Activated T-helper 1 cell treated with anti-CD3 and anti-CD28 coated beads, Interleukin-12 subunit alpha, Interleukin-12 subunit beta, Interleukin-2, Interleukin-4 antibody, amounts not matched to agents 30 ng/mL and 10 ng/mL and 1 ng/mL, durations not matched to agents 14 hours and 24 hours and 36 hours (primary cell): ENCODE measurements at regions of chr6 and their contacts with region 1.

Region 1: DNA sequence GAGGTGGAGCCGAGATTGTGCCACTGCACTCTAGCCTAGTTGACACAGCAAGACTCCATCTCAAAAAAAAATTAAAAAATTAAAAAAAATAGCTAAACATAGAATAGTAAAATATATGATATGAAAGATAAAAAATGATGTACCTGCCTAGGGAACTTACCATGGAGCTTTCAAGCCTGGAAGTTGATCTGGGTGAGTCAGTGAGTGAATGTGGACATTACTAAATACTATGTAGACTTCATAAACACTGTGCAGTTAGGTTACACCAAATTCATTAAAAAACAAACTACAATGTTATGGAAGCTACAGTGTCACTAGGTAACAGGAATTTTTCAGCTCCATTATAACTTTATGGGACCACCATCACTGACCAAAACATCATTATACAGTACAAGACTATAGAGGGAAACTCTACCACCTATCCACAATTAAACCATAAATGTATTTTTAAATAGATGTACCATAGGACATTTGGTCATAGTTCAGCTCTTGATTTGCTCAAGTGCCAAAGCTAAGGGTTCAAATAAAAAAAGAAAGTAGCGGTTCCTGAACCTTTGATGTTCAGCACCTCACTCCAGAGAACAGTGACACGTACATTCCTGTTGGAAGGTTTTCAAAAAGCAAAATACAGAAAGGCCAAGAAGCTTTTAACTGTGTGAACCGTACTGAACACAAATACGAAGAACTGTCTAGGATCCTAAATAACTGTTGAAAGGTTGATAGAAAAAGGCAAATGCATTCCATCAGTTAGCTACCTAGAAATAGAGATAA is 52.4 kb upstream of the SPDEF start:
- DNase-seq: no peak
- H3K4me3 Mint-ChIP-seq: no peak overlapping the region
- H3K27ac Mint-ChIP-seq: no peak overlapping the region
- H3K4me1 Mint-ChIP-seq: peaks cover 36% of the 10 kb centered on the region
- H3K27me3 Mint-ChIP-seq: no peaks in the 10 kb centered on the region

Region 2: GRCh38 chr6:34196126-34196830 is 412.2 kb before region 1 on chr6:
- intact Hi-C with region 1: loop called (anchors 1 kb)
- DNase-seq: peak; percentile 83
- H3K4me3 Mint-ChIP-seq: peak overlapping the region; percentile 79
- H3K27ac Mint-ChIP-seq: peak overlapping the region; percentile 70
- H3K4me1 Mint-ChIP-seq: peaks cover 5% of the 10 kb centered on the region
- H3K27me3 Mint-ChIP-seq: peaks cover 10% of the 10 kb centered on the region

Region 3: GRCh38 chr6:34425498-34426410 is 182.8 kb before region 1 on chr6 and contains the start of gene RPS10:
- intact Hi-C with region 1: loop called (anchors 1 kb)
- DNase-seq: peak; percentile 88
- H3K4me3 Mint-ChIP-seq: peak within 1 kb of the TSS; percentile 99
- H3K27ac Mint-ChIP-seq: peak within 1 kb of the TSS; percentile 99
- H3K4me1 Mint-ChIP-seq: peaks cover 31% of the 10 kb centered on the region
- H3K27me3 Mint-ChIP-seq: peaks cover 4% of the 10 kb centered on the region
- total RNA-seq, gene RPS10: 1,492 and 1,525 TPM in 2 replicates

Region 4: DNA sequence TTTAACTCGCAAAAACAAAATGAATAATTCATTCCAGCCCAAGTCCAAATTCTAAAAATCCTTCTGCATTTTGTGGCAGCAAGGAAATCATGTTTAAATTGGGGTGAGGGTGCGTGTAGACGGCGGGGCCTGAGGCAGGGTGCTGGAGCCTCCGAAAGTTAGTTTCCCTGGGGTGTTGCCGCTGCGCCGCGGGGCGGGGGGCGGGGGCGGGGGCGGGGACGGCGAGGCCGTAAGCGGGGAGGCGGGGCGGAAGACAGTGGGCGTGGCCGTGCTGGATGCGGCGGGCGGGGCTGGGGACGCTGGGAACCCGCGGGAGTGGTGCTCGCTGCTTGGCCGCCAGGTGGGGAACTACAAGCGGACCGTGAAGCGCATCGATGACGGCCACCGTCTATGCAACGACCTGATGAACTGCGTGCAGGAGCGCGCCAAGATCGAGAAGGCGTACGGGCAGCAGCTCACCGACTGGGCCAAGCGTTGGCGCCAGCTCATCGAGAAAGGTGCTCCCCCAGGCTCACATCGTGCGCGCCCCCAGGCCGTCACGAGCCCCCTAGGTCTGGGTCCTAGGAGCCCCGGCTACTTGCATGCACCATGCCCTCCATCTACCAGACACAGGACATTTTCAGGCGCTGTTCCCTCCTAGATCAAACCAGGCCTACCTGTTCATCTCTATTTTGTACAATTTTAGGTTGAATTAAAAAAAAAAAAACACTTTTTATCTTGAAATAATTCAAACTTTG is 81.3 kb before region 1 on chr6:
- intact Hi-C with region 1: loop called (anchors 1 kb)
- DNase-seq: peak; percentile 91
- H3K4me3 Mint-ChIP-seq: peak overlapping the region; percentile 6
- H3K27ac Mint-ChIP-seq: no peak overlapping the region
- H3K4me1 Mint-ChIP-seq: no peaks in the 10 kb centered on the region
- H3K27me3 Mint-ChIP-seq: peaks cover 6% of the 10 kb centered on the region

Region 5: GRCh38 chr6:34696739-34697543 is 88.4 kb after region 1 on chr6 and contains the start of gene ILRUN:
- intact Hi-C with region 1: loop called (anchors 1 kb)
- DNase-seq: peak; percentile 93
- H3K4me3 Mint-ChIP-seq: peak within 1 kb of the TSS; percentile 92
- H3K27ac Mint-ChIP-seq: peak within 1 kb of the TSS; percentile 98
- H3K4me1 Mint-ChIP-seq: peaks cover 39% of the 10 kb centered on the region
- H3K27me3 Mint-ChIP-seq: peaks cover 4% of the 10 kb centered on the region
- total RNA-seq, gene ILRUN: 62.7 and 64.4 TPM in 2 replicates